ENCODE measurements at regions of chr10 and their contacts with region 1.

Region 1: GRCh38 chr10:110279407-110279986 is 25.2 kb downstream of the SMNDC1 start:
- DNase-seq: peak; percentile 62
- H3K4me3 ChIP-seq: no peak overlapping the region
- H3K27ac ChIP-seq: peak overlapping the region in 1 of 2 donors; percentile 36
- H3K4me1 ChIP-seq: no peaks in the 10 kb centered on the region
- H3K27me3 ChIP-seq: no peaks in the 10 kb centered on the region
- CTCF ChIP-seq: peak; percentile 52 to 87 (median 80)
- POLR2A ChIP-seq: no peak

Region 2: DNA sequence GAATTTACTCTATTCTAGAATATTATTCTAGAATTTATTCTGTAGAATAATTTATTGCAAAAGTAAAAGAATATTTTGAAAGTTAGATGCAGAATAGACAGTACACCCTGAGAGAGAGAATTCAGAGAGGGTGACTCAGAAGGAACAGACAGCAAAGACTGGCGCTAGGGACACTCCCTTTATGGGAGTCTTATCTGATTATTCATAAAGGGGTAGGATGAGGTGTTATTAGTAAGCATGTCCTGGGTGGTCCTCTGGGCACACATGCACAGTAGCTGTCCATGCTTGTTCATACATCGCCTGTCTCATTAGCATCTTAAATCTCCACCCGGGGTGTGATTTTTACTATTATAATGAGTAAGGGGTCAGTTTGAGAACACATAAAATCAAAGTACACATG is 456.3 kb before region 1 on chr10:
- intact Hi-C with region 1: no loop called
- DNase-seq: no peak
- H3K4me3 ChIP-seq: no peak overlapping the region
- H3K27ac ChIP-seq: no peak overlapping the region
- H3K4me1 ChIP-seq: no peaks in the 10 kb centered on the region
- H3K27me3 ChIP-seq: no peaks in the 10 kb centered on the region
- CTCF ChIP-seq: no peak
- POLR2A ChIP-seq: no peak

Region 3: DNA sequence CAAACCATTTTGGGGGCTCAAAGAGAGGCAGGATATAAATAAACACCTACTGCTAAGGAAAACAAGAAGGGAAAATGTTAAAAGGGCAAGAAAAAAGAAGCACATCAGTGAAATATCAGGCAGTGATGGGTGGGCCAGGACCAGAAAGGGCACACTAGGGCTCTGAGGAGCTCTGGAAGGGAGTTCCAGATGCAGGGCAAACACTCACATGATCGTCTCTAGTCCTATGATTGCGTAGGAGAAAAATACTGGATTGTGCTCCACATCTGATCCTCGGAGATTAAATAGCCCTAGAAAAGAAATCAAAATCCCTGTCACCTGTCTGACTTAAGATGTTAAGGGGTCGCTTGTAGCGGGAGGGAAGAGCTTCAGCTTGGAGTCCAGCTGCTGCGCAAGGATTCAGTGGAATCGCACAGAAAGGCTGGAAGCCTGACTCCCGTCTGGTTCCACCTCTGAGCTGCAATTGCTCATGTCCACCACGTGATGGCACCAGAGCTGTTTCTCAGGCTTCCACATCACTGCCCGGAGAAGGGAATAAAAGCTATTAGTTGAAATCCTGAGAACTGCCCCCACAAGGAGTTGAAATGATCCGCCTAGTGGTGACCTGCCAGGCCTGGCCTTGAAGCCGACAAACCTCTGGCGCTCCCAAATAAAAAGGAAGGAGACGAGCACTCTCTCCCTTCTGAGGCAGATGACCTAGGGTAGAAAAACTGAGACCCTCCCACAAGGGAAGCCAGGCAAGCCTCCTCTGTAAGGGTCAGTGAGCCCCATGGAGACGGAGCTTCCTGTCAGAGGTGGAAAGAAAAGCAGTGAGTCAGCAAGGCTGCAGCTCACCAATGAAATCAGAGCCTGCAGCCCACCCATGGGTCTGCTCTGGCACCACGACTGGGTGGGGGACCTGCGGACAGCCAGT is 395.4 kb before region 1 on chr10:
- intact Hi-C with region 1: loop called (anchors 10 kb)
- DNase-seq: peak; percentile 41
- H3K4me3 ChIP-seq: no peak overlapping the region
- H3K27ac ChIP-seq: peak overlapping the region; percentile 14 to 42
- H3K4me1 ChIP-seq: no peaks in the 10 kb centered on the region
- H3K27me3 ChIP-seq: no peaks in the 10 kb centered on the region
- CTCF ChIP-seq: peak; percentile 84 to 93 (median 88)
- POLR2A ChIP-seq: no peak

Region 4: GRCh38 chr10:110225756-110226542 is 53.5 kb before region 1 on chr10:
- intact Hi-C with region 1: loop called (anchors 5 kb)
- DNase-seq: peak; percentile 90
- H3K4me3 ChIP-seq: peak overlapping the region; percentile 78 to 89
- H3K27ac ChIP-seq: peak overlapping the region; percentile 96
- H3K4me1 ChIP-seq: no peaks in the 10 kb centered on the region
- H3K27me3 ChIP-seq: no peaks in the 10 kb centered on the region
- CTCF ChIP-seq: peak; percentile 56 to 83 (median 75)
- POLR2A ChIP-seq: peak; percentile 36

Region 5: GRCh38 chr10:110241407-110241806 is 38.1 kb before region 1 on chr10:
- intact Hi-C with region 1: no loop called
- DNase-seq: no peak
- H3K4me3 ChIP-seq: no peak overlapping the region
- H3K27ac ChIP-seq: no peak overlapping the region
- H3K4me1 ChIP-seq: peaks cover 2% of the 10 kb centered on the region
- H3K27me3 ChIP-seq: no peaks in the 10 kb centered on the region
- CTCF ChIP-seq: no peak
- POLR2A ChIP-seq: no peak